PC-9 (cell line): ENCODE measurements at regions of chr7 and their contacts with region 1.

Region 1: DNA sequence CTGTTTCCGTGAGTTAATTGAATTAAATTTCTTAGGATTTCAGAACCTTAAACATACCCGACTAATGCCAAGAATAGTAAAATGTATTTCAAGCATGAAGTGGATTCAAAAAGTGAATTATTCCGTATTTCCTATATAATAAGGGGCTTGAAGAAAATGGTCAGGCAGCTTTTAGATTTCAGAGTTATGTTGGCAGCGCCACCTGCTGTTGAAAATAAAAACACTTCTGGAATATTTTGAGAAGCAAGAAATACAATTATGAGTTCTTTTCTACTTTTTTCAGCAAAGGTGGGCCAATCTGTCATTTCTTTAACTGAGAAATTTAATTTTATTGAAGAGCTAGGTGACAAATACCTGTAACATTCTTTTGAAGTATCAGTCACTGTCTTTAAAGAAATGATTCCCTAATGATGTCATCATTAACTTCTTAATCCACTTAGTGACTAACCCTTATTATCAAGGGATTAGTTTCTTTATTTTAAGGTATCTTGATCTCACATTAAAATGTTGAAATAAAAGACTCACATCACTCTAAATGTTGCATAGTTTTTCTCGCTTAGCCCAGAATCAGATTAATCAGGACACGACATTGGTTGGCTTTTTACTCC is 36.6 kb upstream of the AGR3 start:
- DNase-seq: peak in 1 of 2 experiments; percentile 45
- H3K4me3 ChIP-seq: no peak overlapping the region
- H3K27ac ChIP-seq: no peak overlapping the region
- H3K4me1 ChIP-seq: peaks cover 86% of the 10 kb centered on the region
- H3K27me3 ChIP-seq: no peaks in the 10 kb centered on the region
- CTCF ChIP-seq: peak; percentile 96

Region 2: DNA sequence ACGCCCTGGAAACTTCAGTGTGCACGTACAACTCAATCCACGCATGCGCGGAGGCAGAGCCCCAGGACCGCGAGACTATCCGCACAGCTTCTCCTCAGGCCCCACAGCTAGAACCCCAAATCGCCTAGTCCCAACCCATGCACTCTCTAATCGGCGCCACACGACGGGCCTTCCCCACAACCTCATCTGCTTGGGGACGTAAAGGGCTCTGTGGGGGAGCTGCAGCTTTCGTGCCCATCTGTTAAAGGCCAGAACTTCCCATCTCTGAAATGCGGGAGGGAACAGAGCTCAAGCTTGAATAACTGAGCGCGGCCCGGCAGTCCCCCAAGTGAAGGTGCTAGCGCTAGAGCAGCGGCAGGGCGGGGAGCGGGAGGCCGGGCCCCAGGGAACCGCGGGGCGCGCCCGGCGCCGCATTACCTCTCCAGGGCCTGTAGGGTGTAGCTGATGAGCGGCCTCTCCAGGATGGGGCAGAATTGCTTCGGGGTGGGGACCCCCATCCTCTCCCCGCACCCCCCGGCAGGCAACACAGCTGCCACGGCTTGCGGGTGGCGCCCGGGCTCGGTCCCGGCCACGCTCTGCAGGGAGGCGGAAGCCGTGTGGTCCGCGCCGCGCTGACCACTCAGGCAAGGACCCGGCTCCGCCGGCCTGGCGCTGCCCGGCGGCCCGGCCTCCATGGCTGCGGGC is 497.6 kb before region 1 on chr7:
- CTCF ChIA-PET with region 1: no interaction called
- POLR2A ChIA-PET with region 1: no interaction called
- intact Hi-C with region 1: loop called (anchors 5 kb)
- DNase-seq: peak; percentile 90 to 92
- H3K4me3 ChIP-seq: peak overlapping the region; percentile 68
- H3K27ac ChIP-seq: peak overlapping the region; percentile 89
- H3K4me1 ChIP-seq: peaks cover 56% of the 10 kb centered on the region
- H3K27me3 ChIP-seq: no peaks in the 10 kb centered on the region
- CTCF ChIP-seq: peak; percentile 53; the same call in 1 of the 2 replicates

Region 3: GRCh38 chr7:16753102-16753931 is 165.1 kb before region 1 on chr7 and contains the start of gene TSPAN13:
- CTCF ChIA-PET with region 1: no interaction called
- POLR2A ChIA-PET with region 1: no interaction called
- intact Hi-C with region 1: loop called (anchors 5 kb)
- DNase-seq: peak; percentile 97 to 99
- H3K4me3 ChIP-seq: peak within 1 kb of the TSS; percentile 65
- H3K27ac ChIP-seq: peak within 1 kb of the TSS; percentile 60
- H3K4me1 ChIP-seq: peaks cover 28% of the 10 kb centered on the region
- H3K27me3 ChIP-seq: no peaks in the 10 kb centered on the region
- CTCF ChIP-seq: no peak
- total RNA-seq, gene TSPAN13: 26.5 and 31.1 TPM in 2 replicates

Region 4: GRCh38 chr7:16891338-16891737 is 27.1 kb before region 1 on chr7:
- CTCF ChIA-PET with region 1: interaction called, 9 read pairs
- POLR2A ChIA-PET with region 1: interaction called, 3 read pairs
- intact Hi-C with region 1: loop called (anchors 1 kb)
- DNase-seq: peak; percentile 44 to 73
- H3K4me3 ChIP-seq: no peak overlapping the region
- H3K27ac ChIP-seq: no peak overlapping the region
- H3K4me1 ChIP-seq: peaks cover 15% of the 10 kb centered on the region
- H3K27me3 ChIP-seq: no peaks in the 10 kb centered on the region
- CTCF ChIP-seq: peak; percentile 84

Region 5: GRCh38 chr7:17234398-17235031 is 316.1 kb after region 1 on chr7:
- CTCF ChIA-PET with region 1: no interaction called
- POLR2A ChIA-PET with region 1: no interaction called
- intact Hi-C with region 1: loop called (anchors 5 kb)
- DNase-seq: peak; percentile 56 to 97
- H3K4me3 ChIP-seq: peak overlapping the region; percentile 21; the same call in 1 of the 2 replicates
- H3K27ac ChIP-seq: peak overlapping the region; percentile 67
- H3K4me1 ChIP-seq: peaks cover 32% of the 10 kb centered on the region
- H3K27me3 ChIP-seq: no peaks in the 10 kb centered on the region
- CTCF ChIP-seq: no peak